ENCODE measurements at regions of chr22 and their contacts with region 1.

Region 1: DNA sequence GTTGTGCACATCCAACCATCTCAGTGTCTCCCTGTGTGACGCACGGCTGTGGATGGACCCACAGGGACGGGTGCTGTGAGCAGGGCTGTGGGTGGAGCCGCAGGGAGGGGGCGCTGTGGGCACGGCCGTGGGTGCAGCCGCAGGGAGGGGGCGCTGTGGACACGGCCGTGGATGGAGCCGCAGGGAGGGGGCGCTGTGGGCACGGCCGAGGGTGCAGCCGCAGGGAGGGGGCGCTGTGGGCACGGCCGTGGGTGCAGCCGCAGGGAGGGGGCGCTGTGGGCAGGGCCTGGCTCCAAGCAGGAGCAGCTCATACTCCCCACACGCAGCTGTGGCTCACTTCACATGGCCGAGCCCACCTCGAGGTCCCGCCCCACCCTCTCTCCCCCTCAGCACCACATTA is 6.0 kb upstream of the MAPK11 start:
- DNase-seq: peak in 1 of 2 experiments; percentile 76
- ATAC-seq: peak; percentile 23 to 47
- H3K4me3 ChIP-seq: no peak overlapping the region
- H3K27ac ChIP-seq: no peak overlapping the region
- H3K4me1 ChIP-seq: peaks cover 15% of the 10 kb centered on the region
- CTCF ChIP-seq: peak; percentile 60
- EP300 ChIP-seq: no peak
- POLR2A ChIP-seq: no peak
- RAD21 ChIP-seq: no peak

Region 2: DNA sequence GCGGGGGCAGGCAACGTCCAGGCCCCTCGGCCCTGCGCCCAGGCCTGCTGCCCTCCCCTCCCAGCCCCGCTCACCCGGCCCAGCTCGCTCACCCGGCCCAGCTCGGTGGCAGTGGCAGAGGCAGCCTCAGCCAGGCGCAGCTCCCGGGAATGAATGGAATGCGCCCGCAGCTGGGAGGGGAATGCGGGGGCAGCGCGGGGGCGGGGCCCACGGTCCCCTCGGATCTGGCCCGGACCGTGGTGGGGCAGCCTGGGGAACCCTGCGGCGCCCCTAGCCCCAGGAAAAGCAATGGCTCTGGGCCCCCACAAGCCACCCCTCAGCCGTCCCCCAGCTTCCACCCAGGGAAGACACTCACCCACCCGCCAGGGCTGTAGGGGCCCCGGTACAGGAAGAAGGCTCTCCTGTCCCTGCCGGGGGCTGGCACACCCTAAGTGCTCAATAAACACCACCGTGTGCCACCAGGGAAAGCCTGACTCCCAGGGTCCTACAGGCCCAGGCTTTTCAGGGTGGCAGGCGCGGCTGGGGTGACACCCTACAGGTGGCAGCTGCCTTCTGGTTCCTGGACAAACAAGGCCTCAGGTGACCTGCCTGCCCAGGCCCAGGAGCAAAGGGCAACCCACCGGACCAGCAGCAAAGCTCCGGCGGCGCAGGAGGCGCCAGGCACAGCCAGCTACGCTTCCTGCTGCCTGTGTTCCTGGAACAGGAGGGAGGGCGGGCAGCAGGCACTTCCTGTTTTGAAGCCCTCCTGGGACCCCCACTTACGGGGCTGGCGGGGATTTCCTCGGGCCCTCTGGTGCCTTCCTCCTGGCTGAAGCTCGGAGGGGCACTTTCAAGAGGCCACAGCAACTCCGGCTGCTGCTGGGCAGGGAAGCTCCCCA is 17.5 kb after region 1 on chr22:
- CTCF ChIA-PET with region 1: interaction called, 35 read pairs
- POLR2A ChIA-PET with region 1: interaction called, 3 read pairs
- DNase-seq: peak in 1 of 2 experiments; percentile 62
- ATAC-seq: peak; percentile 71 to 84
- H3K4me3 ChIP-seq: peak overlapping the region; percentile 35
- H3K27ac ChIP-seq: peak overlapping the region; percentile 92 to 94
- H3K4me1 ChIP-seq: peaks cover 48% of the 10 kb centered on the region
- CTCF ChIP-seq: no peak
- EP300 ChIP-seq: no peak
- POLR2A ChIP-seq: no peak
- RAD21 ChIP-seq: no peak

Region 3: GRCh38 chr22:50301581-50302541 is 25.7 kb after region 1 on chr22:
- CTCF ChIA-PET with region 1: interaction called, 57 read pairs
- POLR2A ChIA-PET with region 1: no interaction called
- DNase-seq: no peak
- ATAC-seq: 0 out of 6 replicates have a peak, but pooled peaks of 1 of the 2 experiments have one; percentile 5
- H3K4me3 ChIP-seq: no peak overlapping the region
- H3K27ac ChIP-seq: peak overlapping the region; percentile 98 to 100
- H3K4me1 ChIP-seq: peaks cover 77% of the 10 kb centered on the region
- CTCF ChIP-seq: no peak
- EP300 ChIP-seq: no peak
- POLR2A ChIP-seq: no peak
- RAD21 ChIP-seq: no peak

Region 4: DNA sequence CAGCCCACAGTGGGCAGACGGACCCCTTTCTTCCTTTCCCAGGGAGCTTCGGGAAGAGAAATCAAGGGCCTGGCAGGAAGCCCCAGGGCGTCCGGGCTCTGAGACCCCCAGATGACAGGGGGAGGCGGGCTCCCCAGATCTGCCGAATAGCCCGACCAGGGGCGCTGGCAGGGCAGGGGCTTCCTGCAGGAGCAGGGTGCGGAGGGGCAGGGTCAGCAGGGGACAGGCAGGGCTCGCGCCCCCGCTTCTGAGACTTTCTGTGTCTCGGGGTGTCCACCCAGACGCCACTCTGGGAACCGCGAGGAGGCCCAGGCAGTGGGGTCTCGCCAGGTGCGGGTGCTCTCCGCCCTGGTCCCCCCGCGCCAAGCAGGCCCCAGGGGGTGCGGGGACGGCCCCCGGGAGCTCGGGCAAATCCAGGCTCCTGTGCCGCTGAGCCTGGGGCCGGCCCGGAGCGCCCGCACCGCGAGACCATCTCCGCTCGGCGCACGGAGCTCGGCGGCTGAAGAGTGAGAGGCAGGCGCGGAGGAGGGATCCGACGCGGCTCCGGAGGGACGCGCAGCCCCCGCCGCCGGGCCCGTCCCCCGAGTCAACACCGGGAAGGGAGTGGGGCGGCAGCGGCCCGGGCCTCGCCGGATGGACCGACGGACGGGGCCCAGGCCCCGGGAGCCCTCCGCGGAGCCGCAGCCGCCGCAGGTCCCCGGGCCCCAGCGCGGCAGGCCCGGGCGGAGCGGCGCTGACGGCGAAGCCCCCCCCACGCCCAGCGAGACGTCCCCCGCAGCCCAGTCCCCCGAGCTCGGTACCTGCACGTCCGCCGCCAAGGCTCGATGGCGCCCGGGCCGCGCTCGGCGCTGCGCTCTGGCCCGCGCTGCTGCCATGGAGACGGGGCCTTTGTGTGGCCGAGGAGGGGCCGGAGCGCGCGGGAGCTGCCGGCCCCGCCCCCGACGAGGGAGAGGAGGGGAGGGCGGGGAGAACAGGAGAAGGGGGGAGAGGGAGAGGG is 30.9 kb after region 1 on chr22 and contains the start of gene PLXNB2:
- CTCF ChIA-PET with region 1: interaction called, 57 read pairs
- POLR2A ChIA-PET with region 1: no interaction called
- DNase-seq: peak; percentile 40 to 77
- ATAC-seq: no peak
- H3K4me3 ChIP-seq: peak within 1 kb of the TSS; percentile 100
- H3K27ac ChIP-seq: peak within 1 kb of the TSS; percentile 98 to 100
- H3K4me1 ChIP-seq: peaks cover 48% of the 10 kb centered on the region
- CTCF ChIP-seq: no peak
- EP300 ChIP-seq: no peak
- POLR2A ChIP-seq: peak; percentile 53
- RAD21 ChIP-seq: no peak
- polyA plus RNA-seq, gene PLXNB2: 24.6 and 32.4 TPM in 2 replicates

Region 5: GRCh38 chr22:50314455-50315288 is 38.5 kb after region 1 on chr22:
- CTCF ChIA-PET with region 1: interaction called, 10 read pairs
- POLR2A ChIA-PET with region 1: no interaction called
- DNase-seq: no peak
- ATAC-seq: peak in 1 of 2 experiments; percentile 72; a peak in 3 of 6 replicates
- H3K4me3 ChIP-seq: no peak overlapping the region
- H3K27ac ChIP-seq: no peak overlapping the region
- H3K4me1 ChIP-seq: 0 out of 3 replicates have a peak, but pooled peaks cover 3% of the 10 kb centered on the region
- CTCF ChIP-seq: no peak
- EP300 ChIP-seq: no peak
- POLR2A ChIP-seq: no peak
- RAD21 ChIP-seq: no peak

Region 6: DNA sequence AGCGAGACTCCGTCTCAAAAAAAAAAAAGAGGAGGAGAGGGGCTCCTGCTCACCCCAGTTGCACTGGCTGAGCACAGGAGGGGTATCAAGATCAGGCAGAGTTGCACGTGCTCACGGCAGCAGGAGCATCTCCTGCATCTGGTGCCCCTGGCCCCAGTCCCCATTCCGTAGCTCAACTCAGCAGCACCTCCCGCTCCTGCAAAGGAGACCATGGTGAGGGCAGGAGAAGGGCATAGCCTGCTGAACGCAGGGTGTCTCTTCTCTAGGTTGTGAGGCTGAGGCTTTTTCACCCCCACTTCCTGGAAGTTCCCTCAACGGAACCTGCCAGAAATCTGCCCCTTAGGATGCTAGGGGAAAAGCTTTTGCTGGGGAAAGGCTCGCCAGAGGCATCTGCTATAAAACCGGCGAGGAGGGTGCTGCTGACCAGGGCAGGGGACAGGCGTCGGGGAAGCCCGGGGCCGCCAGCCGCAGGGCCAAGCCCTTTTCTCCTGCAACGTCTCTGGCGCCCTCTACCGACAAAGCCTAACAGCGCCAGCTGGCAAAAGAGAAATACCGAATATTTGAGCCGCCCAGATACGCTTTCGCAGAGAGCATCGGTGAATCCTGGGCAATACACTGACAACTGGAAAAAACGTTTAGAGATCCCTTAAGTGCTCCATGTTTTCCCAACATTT is 66.0 kb after region 1 on chr22:
- CTCF ChIA-PET with region 1: interaction called, 47 read pairs
- POLR2A ChIA-PET with region 1: no interaction called
- DNase-seq: peak; percentile 35 to 83
- ATAC-seq: peak; percentile 79 to 89
- H3K4me3 ChIP-seq: peak overlapping the region; percentile 88
- H3K27ac ChIP-seq: peak overlapping the region; percentile 74 to 100
- H3K4me1 ChIP-seq: no peaks in the 10 kb centered on the region
- CTCF ChIP-seq: peak; percentile 87
- EP300 ChIP-seq: no peak
- POLR2A ChIP-seq: no peak
- RAD21 ChIP-seq: peak; percentile 81 to 86

Measured in A549 (cell line).